ENCODE measurements at regions of chr7 and their contacts with region 1.

Region 1: DNA sequence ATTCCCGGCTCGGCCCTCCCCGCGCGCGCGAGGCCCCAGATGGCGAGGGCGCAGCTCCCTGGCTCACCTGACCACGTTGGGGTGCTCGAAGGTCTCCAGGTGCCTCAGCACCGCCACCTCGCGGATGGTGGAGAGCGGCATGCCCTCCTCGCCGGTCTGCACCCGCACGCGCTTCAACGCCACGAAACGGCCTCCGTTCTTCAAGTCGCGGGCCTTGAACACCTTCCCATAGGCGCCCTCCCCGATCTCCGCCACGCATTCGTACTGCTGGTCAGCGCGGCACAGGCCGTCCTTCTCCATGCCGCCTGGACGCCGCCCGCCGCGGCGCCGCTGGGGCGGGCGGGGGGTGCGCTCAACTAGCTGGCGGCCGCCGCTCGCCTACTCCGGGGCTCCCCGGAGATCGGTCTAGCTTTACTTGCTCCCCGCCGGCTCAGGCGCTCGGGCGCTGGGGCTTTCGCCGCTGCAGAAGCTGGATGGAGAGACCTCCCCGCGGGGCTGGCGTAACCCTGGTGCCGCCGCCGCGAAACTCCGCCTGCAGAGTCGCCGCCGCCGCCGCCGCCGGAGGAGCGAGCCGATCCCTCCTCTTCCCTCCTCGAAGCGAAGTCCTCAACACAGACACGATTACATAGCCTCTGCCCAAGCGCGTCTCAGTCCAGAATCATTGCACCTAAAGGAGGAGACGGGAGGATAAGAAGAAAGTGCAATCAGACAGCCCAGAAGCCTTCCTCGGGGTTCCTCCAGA is 3.2 kb downstream of the CDK6 start:
- DNase-seq: peak; percentile 77
- ATAC-seq: peak; percentile 70
- H3K4me3 ChIP-seq: peak overlapping the region; percentile 93 to 99 (median 94)
- H3K27ac ChIP-seq: peak overlapping the region; percentile 94
- H3K4me1 ChIP-seq: peaks cover 47% of the 10 kb centered on the region
- H3K27me3 ChIP-seq: no peaks in the 10 kb centered on the region; a peak in 1 of 5 replicates
- CTCF ChIP-seq: peak; percentile 97
- EP300 ChIP-seq: no peak
- POLR2A ChIP-seq: 0 out of 4 replicates have a peak, but pooled peaks have one; percentile 18 to 32
- RAD21 ChIP-seq: peak; percentile 86

Region 2: DNA sequence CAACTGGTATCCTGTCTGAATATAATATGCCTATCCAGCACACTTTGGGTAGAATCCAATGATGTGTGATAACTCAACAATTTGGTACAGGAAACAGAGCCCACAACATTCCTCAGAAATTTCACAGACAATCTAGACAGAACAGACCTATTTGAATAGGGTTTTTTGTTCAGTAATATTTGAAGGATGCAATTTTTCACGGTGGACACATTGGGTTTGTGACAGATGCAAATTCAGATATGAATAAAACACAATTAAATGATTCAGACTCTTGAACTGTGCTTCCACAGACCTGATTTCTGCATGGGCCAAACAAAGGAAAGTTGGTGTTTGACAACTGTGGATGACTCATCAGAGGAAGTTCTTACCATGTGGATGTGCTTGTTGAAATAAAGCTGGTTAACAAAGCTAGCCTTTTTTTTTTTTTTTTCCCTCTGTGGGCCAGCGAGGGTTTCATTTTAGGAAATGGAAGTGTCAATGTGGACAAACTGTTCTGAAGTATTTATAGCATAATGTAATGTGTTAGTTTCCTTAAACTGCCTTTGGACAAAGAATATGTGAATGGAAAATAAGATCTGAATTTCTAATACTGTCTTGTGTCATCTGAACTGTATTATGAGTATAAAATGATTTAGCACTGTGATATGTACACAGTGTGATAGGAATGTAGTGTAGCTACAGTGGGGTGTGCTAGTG is 199.8 kb before region 1 on chr7:
- CTCF ChIA-PET with region 1: no interaction called
- POLR2A ChIA-PET with region 1: no interaction called
- in situ Hi-C with region 1: no loop called
- intact Hi-C with region 1: no loop called
- DNase-seq: peak; percentile 87
- ATAC-seq: peak; percentile 83
- H3K4me3 ChIP-seq: no peak overlapping the region; a peak in 1 of 6 replicates
- H3K27ac ChIP-seq: no peak overlapping the region
- H3K4me1 ChIP-seq: peaks cover 36% of the 10 kb centered on the region
- H3K27me3 ChIP-seq: no peaks in the 10 kb centered on the region
- CTCF ChIP-seq: no peak
- EP300 ChIP-seq: no peak; a peak in 1 of 4 replicates
- POLR2A ChIP-seq: no peak
- RAD21 ChIP-seq: no peak

Region 3: GRCh38 chr7:92682903-92683539 is 150.2 kb before region 1 on chr7:
- CTCF ChIA-PET with region 1: no interaction called
- POLR2A ChIA-PET with region 1: interaction called, 4 read pairs
- in situ Hi-C with region 1: loop called (anchors 5 kb)
- intact Hi-C with region 1: no loop called
- DNase-seq: peak; percentile 90
- ATAC-seq: peak; percentile 71
- H3K4me3 ChIP-seq: no peak overlapping the region; a peak in 1 of 6 replicates
- H3K27ac ChIP-seq: peak overlapping the region; percentile 91
- H3K4me1 ChIP-seq: peaks cover 78% of the 10 kb centered on the region
- H3K27me3 ChIP-seq: no peaks in the 10 kb centered on the region
- CTCF ChIP-seq: no peak
- EP300 ChIP-seq: peak in 1 of 2 experiments; percentile 90; a peak in 2 of 4 replicates
- POLR2A ChIP-seq: no peak
- RAD21 ChIP-seq: no peak

Region 4: DNA sequence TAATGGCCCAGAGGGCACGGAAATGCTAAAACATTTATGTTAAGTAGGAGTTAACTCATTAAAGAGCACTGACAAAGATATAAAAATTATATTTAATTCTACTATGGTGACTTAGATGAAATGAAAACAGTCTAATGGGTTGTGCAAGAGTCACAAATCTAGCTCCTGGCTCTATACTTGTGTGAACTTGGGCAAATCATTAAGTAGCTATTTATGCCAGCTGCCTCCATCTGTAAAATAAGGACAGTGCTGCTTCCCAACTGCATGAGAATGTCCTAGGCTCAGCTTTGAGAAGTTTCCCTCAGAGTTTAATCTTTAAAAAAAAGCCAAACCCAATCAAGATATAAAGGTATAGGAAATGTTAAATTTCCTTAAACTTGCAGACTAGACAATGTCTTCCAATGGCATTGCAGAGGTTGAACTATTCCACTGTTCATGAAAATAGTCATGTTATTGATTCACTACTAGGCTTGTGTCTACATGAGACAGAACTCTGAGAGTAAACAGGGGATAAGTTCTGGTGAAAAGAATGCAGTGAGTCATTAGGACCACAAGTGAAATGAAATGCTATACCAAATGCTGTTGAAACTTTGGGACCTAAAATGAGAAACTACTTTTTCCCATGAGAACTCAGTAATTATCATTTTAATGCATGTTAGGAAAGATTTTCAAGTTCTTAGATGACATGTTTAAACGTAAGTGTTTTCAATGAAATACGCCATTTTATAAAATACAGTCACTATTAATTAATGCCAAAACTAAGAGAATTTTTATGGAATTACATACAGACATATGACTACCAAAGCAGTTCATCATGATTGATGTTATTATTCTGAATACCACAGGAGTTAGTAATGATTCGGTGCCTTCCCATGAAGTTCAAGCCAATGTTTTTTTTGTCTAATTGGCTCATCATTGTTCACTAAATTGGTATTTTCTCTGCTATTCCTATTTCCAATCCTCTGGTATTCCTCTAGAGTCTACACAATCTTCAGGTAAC is 81.0 kb before region 1 on chr7:
- CTCF ChIA-PET with region 1: no interaction called
- POLR2A ChIA-PET with region 1: no interaction called
- in situ Hi-C with region 1: no loop called
- intact Hi-C with region 1: loop called (anchors 5 kb)
- DNase-seq: peak; percentile 93
- ATAC-seq: peak; percentile 98
- H3K4me3 ChIP-seq: no peak overlapping the region; a peak in 1 of 6 replicates
- H3K27ac ChIP-seq: peak overlapping the region; percentile 69
- H3K4me1 ChIP-seq: peaks cover 54% of the 10 kb centered on the region
- H3K27me3 ChIP-seq: no peaks in the 10 kb centered on the region
- CTCF ChIP-seq: no peak
- EP300 ChIP-seq: peak; percentile 43 to 77; a peak in 3 of 4 replicates
- POLR2A ChIP-seq: no peak
- RAD21 ChIP-seq: no peak

Region 5: GRCh38 chr7:92820191-92820590 is 13.0 kb before region 1 on chr7:
- CTCF ChIA-PET with region 1: no interaction called
- POLR2A ChIA-PET with region 1: interaction called, 8 read pairs
- in situ Hi-C with region 1: no loop called
- intact Hi-C with region 1: loop called (anchors 1 kb)
- DNase-seq: no peak
- ATAC-seq: peak; percentile 73
- H3K4me3 ChIP-seq: no peak overlapping the region; a peak in 1 of 6 replicates
- H3K27ac ChIP-seq: peak overlapping the region; percentile 40
- H3K4me1 ChIP-seq: peaks cover 84% of the 10 kb centered on the region
- H3K27me3 ChIP-seq: no peaks in the 10 kb centered on the region
- CTCF ChIP-seq: no peak
- EP300 ChIP-seq: no peak
- POLR2A ChIP-seq: no peak
- RAD21 ChIP-seq: no peak

Region 6: GRCh38 chr7:93055543-93056107 is 222.4 kb after region 1 on chr7:
- CTCF ChIA-PET with region 1: no interaction called
- POLR2A ChIA-PET with region 1: no interaction called
- in situ Hi-C with region 1: loop called (anchors 10 kb)
- intact Hi-C with region 1: loop called (anchors 1 kb)
- DNase-seq: peak; percentile 34
- ATAC-seq: no peak
- H3K4me3 ChIP-seq: no peak overlapping the region
- H3K27ac ChIP-seq: no peak overlapping the region
- H3K4me1 ChIP-seq: peaks cover 10% of the 10 kb centered on the region; the same call in 1 of the 2 replicates
- H3K27me3 ChIP-seq: peaks cover 0 to 3% of the 10 kb centered on the region in 2 experiments; a peak in 1 of 5 replicates
- CTCF ChIP-seq: peak; percentile 70
- EP300 ChIP-seq: no peak
- POLR2A ChIP-seq: no peak
- RAD21 ChIP-seq: peak; percentile 58

Measured in HepG2 (cell line).